ENCODE measurements at regions of chr14 and their contacts with region 1.

Region 1: DNA sequence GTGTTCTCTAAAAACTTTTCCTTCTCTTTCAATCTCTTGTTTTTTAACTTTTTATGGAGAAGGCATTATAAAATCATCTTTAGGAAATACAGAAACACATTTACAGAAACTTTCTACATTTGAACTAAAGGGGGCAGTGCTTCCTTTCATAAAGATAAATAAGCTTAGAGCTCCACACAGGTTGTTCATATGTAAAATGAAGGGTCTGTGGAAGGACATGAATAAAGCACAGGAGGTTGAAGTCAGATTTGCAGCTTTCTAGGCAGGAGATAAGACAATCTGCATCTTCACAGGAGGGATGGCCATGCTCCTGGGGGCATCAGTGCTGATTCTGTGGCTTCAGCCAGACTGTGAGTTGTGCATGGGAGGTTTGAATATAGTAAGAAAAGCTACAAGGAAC is 426.0 kb downstream of the DAD1 start:
- DNase-seq: no peak
- H3K4me3 ChIP-seq: no peak overlapping the region
- H3K27ac ChIP-seq: no peak overlapping the region
- H3K27me3 ChIP-seq: peaks cover 2% of the 10 kb centered on the region
- CTCF ChIP-seq: peak; percentile 60

Region 2: GRCh38 chr14:22177870-22178269 is 14.8 kb after region 1 on chr14:
- CTCF ChIA-PET with region 1: interaction called, 13 read pairs
- POLR2A ChIA-PET with region 1: no interaction called
- DNase-seq: no peak
- H3K4me3 ChIP-seq: no peak overlapping the region
- H3K27ac ChIP-seq: no peak overlapping the region
- H3K27me3 ChIP-seq: no peaks in the 10 kb centered on the region
- CTCF ChIP-seq: no peak

Region 3: DNA sequence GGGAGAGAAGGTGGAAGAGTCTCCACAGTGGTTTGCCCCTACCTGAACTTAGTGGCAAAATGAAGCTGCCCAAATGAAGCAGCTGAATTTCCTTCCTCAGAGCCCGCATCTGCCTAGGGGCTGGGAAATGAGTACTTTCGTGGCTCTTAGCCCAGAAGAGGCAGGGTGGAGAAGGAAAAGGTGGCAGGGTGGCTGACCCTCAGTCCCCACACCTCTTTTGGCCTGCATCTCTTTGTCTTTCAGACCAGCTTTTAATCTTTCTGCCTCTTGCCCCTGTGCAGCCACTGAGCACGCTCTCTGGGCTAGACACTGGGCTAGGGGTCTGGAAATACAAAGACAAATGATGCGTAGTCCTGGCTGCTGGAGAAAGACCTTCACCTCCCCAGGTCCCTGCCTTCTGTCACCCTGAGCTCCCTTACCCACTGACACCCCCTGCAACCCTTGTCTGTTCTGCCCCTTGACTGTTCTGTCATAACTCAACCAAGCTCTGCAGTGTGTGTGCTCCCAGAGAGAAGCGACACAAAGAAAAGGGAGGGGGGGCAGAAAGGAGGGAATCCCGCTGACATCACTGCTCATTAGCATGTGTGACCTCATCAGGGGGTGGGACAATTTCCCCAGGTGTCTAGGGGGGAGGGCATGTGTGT is 719.6 kb after region 1 on chr14:
- CTCF ChIA-PET with region 1: no interaction called
- POLR2A ChIA-PET with region 1: no interaction called
- DNase-seq: no peak
- H3K4me3 ChIP-seq: no peak overlapping the region
- H3K27ac ChIP-seq: no peak overlapping the region
- H3K27me3 ChIP-seq: no peaks in the 10 kb centered on the region
- CTCF ChIP-seq: no peak